Mucosa of descending colon (tissue), 3 donors: ENCODE measurements at regions of chr17 and their contacts with region 1.

Region 1: DNA sequence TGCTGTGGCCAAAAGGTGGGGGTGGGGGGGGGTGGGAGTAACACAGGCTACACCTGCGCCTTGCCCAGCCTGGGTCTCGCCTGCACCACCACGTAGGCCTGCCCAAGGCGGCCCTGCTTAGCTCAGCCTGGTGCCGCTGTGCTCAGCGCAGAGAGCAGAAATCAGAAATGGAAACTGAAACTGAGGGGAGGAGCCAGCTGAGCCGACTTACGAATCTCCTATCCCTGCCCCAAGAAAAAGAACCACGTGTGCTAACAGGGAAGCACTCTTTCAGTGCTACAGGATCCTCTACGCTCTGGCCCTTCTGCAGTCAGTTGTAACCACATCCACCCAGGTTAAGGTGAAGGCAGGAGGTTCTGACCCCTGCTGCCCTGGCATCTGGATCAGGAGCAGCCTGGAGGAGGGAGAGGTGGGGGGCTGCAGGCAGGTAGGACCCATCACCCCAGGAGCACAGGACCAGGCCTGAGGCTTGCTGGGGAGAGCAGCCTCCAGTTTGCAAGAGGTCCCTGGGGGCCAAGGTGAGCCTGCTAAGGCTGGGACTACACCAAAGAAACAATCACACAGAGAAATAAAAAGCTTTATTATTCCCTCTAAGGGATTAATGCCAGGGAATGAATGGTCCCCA is at the start of gene DHX58:
- DNase-seq: peak; percentile 81 to 89 (median 85)
- ATAC-seq: peak; percentile 89
- H3K4me3 ChIP-seq: peak within 1 kb of the TSS; percentile 19
- H3K4me1 ChIP-seq: peaks cover 18% of the 10 kb centered on the region
- CTCF ChIP-seq: no peak
- total RNA-seq, gene DHX58: 11.7 to 18.0 (median 14.0) TPM

Region 2: DNA sequence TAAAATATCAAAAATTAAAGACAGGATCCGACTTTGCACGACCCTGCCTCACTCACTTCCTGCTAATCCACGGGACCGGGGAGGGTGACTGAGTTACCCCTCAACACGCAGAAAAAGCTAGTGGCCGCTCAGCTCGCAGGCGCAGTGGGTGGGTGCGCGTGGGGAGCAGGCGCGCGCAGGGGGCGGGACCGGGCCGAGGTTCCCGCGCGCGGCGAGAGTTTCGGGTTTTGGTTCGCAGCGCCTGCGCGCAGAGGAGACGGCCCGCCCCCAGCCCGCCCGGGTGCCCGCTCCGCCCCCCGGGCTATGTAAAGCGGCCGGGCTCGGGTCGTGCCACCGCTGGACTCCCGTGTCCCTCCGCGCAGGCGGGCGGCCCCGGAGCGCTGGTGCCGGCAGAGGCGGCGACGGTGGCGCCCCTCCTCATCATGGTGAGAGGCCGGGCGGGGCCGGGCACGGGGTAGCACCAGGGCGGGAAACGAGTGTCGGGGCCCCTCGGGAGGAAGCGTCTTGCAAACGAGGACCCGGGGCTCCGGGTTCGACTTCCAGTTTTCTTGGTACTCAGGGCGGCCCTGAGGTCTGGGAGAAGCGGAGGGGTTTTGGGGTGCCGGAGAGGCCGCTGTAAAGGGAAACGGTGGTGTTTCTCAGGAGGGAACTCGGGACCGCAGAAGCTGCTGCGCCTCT is 146.1 kb before region 1 on chr17 and contains the start of gene CNP:
- intact Hi-C with region 1: loop called in 1 of 2 experiments (anchors 10 kb)
- DNase-seq: peak; percentile 92 to 95 (median 93)
- ATAC-seq: peak; percentile 91
- H3K4me3 ChIP-seq: peak within 1 kb of the TSS; percentile 38
- H3K4me1 ChIP-seq: peaks cover 16% of the 10 kb centered on the region
- CTCF ChIP-seq: no peak
- total RNA-seq, gene CNP: 44.1 to 88.0 (median 51.6) TPM

Region 3: GRCh38 chr17:42067351-42068091 is 45.1 kb before region 1 on chr17:
- intact Hi-C with region 1: loop called in 1 of 2 experiments (anchors 5 kb)
- DNase-seq: peak; percentile 61 to 86 (median 83)
- ATAC-seq: peak; percentile 77
- H3K4me3 ChIP-seq: no peak overlapping the region
- H3K4me1 ChIP-seq: peaks cover 16% of the 10 kb centered on the region
- CTCF ChIP-seq: peak; percentile 94